K562 (cell line): ENCODE measurements at regions of chr3 and their contacts with region 1.

Region 1: DNA sequence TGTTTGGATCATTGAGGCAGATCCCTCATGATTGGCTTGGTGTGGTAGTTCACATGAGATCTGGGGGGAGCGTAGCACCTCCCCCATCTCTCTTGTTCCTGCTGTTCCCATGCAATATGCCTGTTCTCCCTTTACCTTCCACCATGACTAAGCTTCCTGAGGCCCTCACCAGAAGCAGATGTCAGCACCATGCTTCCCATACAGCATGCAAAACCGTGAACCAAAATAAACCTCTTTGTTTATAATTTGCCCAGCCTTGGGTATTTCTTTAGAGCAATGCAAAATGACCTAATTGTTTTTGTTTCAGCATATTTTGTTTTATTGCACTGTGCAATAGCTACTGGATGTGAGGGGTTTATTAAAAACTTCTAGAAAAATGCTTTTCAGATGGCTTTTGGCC is 56.6 kb upstream of the CHST2 start:
- DNase-seq: no peak
- ATAC-seq: peak; percentile 14; the same call in 1 of the 3 replicates
- H3K4me3 ChIP-seq: no peak overlapping the region
- H3K27ac ChIP-seq: no peak overlapping the region
- H3K4me1 ChIP-seq: peaks cover 0 to 3% of the 10 kb centered on the region in 2 experiments; a peak in 1 of 5 replicates
- H3K27me3 ChIP-seq: no peaks in the 10 kb centered on the region
- CTCF ChIP-seq: no peak
- EP300 ChIP-seq: no peak
- POLR2A ChIP-seq: no peak; the same call in 1 of the 2 replicates
- RAD21 ChIP-seq: no peak

Region 2: DNA sequence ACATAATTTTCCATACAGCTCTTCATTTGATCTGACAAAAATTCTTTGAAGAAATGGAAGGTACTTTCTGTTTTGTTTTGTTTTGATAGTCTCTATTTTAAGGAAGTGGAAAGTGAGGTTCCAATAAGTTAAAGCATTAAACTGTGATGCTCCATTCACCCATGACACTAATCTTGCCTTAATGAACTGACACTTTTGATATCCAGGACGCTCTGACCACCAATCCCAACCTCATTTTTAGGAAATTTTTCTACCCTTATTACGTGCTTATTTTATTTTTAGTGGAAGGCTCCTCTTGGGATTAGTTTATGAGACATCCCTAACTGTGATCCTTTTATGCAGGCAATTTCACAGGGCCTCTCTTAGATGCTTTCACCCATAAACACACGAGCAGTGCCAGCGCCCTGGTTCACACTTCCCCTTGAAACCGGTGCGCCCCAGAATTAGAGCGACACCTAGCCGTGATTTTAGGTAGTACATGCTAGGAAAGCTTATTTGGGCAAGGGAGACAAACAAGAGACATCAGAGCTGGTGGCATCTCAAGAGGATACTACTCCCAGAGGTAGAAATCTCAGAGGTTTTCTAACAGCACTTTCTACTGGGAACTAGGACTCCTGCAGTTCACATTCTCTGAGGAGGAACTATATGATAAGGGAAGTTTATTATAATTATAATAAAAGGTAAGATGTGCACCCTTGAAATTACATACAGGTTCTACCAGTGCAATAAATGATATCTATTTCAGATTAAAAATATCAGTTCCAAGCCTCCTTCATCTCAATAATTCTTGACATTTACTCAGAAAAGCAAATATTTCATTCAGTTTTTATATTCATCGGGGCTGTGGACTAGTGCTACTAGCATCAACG is 611.3 kb after region 1 on chr3:
- CTCF ChIA-PET with region 1: no interaction called
- POLR2A ChIA-PET with region 1: no interaction called
- in situ Hi-C with region 1: no loop called
- intact Hi-C with region 1: loop called (anchors 5 kb)
- DNase-seq: peak; percentile 66 to 78 (median 70)
- ATAC-seq: peak; percentile 94
- H3K4me3 ChIP-seq: no peak overlapping the region
- H3K27ac ChIP-seq: no peak overlapping the region
- H3K4me1 ChIP-seq: no peaks in the 10 kb centered on the region
- H3K27me3 ChIP-seq: peaks cover 0 to 3% of the 10 kb centered on the region in 2 experiments; a peak in 2 of 5 replicates
- CTCF ChIP-seq: peak; percentile 82 to 89 (median 83)
- EP300 ChIP-seq: no peak
- POLR2A ChIP-seq: no peak
- RAD21 ChIP-seq: peak; percentile 84 to 85